Dendritic cell treated with granulocyte-macrophage colony-stimulating factor and Interleukin-4, amounts not matched to agents 40 ng/mL and 50 ng/mL, for 4 days (primary cell): ENCODE measurements at regions of chr12 and their contacts with region 1.

Region 1: GRCh38 chr12:54368709-54369583 is 4.7 kb upstream of the GPR84 start:
- H3K4me3 Mint-ChIP-seq: peak overlapping the region; percentile 18
- H3K27ac Mint-ChIP-seq: peak overlapping the region; percentile 58
- H3K4me1 Mint-ChIP-seq: peaks cover 80% of the 10 kb centered on the region
- H3K27me3 Mint-ChIP-seq: no peaks in the 10 kb centered on the region

Region 2: DNA sequence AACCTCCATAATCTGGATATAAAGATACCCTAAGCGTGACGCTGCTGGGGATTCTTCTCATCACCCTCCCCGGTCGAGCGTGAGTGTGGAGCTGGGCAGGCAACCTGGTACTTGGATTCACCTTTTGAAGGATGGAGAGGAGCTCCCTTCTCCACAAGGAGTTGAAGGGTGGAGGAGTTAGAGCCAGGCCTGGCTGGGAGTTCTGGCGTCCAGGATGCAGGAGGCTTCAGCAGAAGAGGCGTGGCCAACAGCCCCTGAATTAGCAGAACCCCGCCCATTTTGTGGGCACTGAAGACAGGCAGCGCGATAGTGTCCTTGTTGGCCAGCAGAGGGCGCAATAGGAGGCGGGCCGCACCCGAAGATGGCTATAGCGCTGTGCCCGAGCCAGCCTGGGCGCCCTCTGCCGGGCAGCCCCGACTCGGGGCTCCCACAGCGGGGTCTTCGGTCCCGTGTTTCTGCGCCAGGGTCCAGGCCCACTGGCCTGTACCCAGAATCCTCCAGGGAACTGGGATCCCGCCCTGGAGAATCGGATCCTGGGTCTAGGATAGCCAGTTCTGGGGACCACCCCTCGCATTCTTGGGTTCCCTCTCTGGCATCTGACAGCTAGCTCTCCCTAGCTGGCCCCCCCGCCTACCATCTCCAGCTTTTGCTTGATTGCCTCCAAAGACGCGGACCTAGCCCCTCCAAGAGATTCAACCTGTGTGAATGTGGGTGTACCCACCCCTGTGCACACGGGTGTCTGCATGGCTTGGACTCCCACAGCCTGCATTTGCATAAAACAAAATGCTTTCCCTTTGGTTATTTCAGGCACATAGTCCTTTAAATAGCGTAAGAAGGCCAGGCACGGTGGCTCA is 154.2 kb before region 1 on chr12:
- intact Hi-C with region 1: no loop called
- H3K4me3 Mint-ChIP-seq: peak overlapping the region; percentile 56
- H3K27ac Mint-ChIP-seq: no peak overlapping the region
- H3K4me1 Mint-ChIP-seq: peaks cover 24% of the 10 kb centered on the region
- H3K27me3 Mint-ChIP-seq: peaks cover 77% of the 10 kb centered on the region

Region 3: DNA sequence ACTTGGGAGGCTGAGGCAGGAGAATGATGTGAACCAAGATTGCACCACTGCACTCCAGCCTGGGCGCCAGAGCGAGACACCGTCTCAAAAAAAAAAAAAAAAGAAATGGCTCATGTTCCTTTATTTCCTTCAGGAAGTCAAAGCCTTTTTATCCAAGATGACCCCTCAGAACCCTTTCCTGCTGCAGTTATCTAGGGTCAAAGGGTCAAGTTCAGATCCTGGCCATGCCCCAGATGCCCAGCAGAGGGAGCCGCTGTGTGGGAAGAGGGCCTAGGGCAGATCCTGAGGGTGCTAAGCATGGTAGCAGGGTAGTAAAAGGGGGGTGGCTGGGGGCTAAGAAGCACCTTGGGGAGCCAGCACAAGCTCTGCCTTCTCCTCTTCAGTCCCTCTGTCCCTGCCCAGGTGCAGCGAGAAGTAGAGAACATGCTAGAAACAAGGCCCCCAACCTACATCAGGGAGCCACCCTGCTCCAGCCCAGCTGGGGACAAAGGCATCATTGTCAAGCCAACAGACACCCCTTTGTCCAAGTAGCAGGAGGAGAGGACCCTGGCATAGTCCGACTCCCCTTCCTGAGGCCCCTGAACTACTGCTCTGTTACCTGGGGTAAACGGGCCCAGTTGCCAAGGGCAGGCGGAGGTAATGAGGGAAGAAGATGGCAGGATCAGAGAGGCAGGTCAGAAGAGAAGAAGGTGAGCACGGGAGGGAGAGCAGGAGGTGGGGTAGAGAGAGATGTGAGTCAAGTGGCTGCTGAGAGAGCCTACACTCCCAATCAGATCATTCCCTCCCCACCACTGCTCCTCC is 74.6 kb before region 1 on chr12:
- intact Hi-C with region 1: loop called (anchors 2 kb)
- H3K4me3 Mint-ChIP-seq: peak overlapping the region; percentile 21
- H3K27ac Mint-ChIP-seq: peak overlapping the region; percentile 54
- H3K4me1 Mint-ChIP-seq: peaks cover 94% of the 10 kb centered on the region
- H3K27me3 Mint-ChIP-seq: no peaks in the 10 kb centered on the region

Region 4: DNA sequence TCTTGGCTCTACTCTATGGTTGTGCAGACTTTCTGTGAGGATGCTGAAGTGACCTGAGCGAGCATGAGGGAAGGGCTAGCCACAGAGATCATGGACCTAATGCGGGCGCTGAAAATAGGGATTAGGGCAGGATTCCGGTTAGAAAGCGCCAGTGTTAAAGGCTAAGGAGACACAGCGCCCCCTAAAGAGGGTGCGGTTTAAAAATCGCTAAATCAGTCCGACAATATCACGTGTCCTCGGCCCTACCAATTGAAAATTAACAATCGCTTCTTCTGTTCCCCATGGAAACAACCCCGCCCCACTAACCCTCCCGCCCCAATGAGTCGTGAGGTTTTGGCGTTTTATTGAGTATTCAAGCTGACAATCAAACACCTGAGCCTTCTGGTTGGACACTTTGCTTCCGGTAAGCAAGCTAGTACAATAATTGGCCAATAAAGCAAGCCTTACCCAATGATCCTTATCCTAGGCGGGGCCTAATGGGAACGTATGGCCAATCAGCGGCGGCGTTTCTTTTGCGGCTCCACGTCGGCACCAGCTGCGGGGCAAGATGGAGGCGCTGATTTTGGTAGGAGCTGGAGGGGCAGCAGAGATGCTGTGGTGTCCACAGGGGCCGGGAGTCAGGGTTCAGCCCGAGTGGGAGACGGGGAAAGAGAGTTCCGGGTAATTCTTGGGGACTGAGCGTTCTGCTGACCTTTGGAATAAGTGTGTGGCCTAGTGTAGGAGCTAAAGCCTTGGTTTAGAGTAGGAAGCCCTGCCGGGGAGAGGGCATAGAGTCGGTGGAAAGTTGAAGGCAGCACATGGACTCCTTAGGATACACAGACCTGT is 44.1 kb before region 1 on chr12 and contains the start of gene COPZ1:
- intact Hi-C with region 1: loop called (anchors 5 kb)
- H3K4me3 Mint-ChIP-seq: peak within 1 kb of the TSS; percentile 100
- H3K27ac Mint-ChIP-seq: peak within 1 kb of the TSS; percentile 95
- H3K4me1 Mint-ChIP-seq: peaks cover 48% of the 10 kb centered on the region
- H3K27me3 Mint-ChIP-seq: no peaks in the 10 kb centered on the region

Region 5: GRCh38 chr12:54337280-54337842 is 31.6 kb before region 1 on chr12:
- intact Hi-C with region 1: loop called (anchors 2 kb)
- H3K4me3 Mint-ChIP-seq: no peak overlapping the region
- H3K27ac Mint-ChIP-seq: peak overlapping the region; percentile 77
- H3K4me1 Mint-ChIP-seq: peaks cover 34% of the 10 kb centered on the region
- H3K27me3 Mint-ChIP-seq: no peaks in the 10 kb centered on the region